ENCODE measurements at regions of chr3 and their contacts with region 1.

Region 1: GRCh38 chr3:4712143-4712542 is 219.0 kb downstream of the ITPR1 start:
- DNase-seq: peak in 1 of 2 donors; percentile 69
- H3K4me3 ChIP-seq: no peak overlapping the region
- H3K27ac ChIP-seq: peak overlapping the region; percentile 32 to 50
- H3K4me1 ChIP-seq: peaks cover 0 to 6% of the 10 kb centered on the region in 2 donors
- H3K27me3 ChIP-seq: no peaks in the 10 kb centered on the region
- CTCF ChIP-seq: no peak
- POLR2A ChIP-seq: no peak

Region 2: GRCh38 chr3:3726549-3726948 is 985.6 kb before region 1 on chr3:
- intact Hi-C with region 1: no loop called
- DNase-seq: no peak
- H3K4me3 ChIP-seq: no peak overlapping the region
- H3K27ac ChIP-seq: no peak overlapping the region
- H3K4me1 ChIP-seq: no peaks in the 10 kb centered on the region
- H3K27me3 ChIP-seq: no peaks in the 10 kb centered on the region
- CTCF ChIP-seq: no peak
- POLR2A ChIP-seq: no peak

Region 3: GRCh38 chr3:4340411-4341335 is 371.5 kb before region 1 on chr3:
- intact Hi-C with region 1: no loop called
- DNase-seq: peak in 1 of 2 donors; percentile 57
- H3K4me3 ChIP-seq: no peak overlapping the region
- H3K27ac ChIP-seq: peak overlapping the region; percentile 76 to 90
- H3K4me1 ChIP-seq: peaks cover 0 to 24% of the 10 kb centered on the region in 2 donors
- H3K27me3 ChIP-seq: no peaks in the 10 kb centered on the region
- CTCF ChIP-seq: no peak
- POLR2A ChIP-seq: no peak

Region 4: DNA sequence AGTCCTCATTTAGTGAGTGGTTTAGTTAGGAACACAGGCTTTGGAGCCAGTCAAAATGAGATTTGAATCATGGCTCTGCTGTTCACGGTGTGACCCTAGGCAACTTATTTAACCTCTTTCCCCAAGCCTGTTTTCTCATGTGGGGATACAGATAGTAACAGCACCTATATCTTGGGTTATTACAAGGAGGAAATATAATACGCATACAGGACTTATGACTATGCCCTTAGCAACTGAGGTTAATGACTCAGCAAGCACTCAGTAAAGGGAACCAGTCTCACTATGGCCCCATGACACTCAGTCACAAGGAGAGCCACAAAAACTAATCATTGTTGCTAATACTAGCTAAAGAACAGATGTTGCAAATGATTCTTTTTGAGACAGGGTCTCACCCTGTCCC is 291.0 kb before region 1 on chr3:
- intact Hi-C with region 1: no loop called
- DNase-seq: no peak
- H3K4me3 ChIP-seq: no peak overlapping the region
- H3K27ac ChIP-seq: no peak overlapping the region
- H3K4me1 ChIP-seq: no peaks in the 10 kb centered on the region
- H3K27me3 ChIP-seq: no peaks in the 10 kb centered on the region
- CTCF ChIP-seq: no peak
- POLR2A ChIP-seq: no peak

Region 5: GRCh38 chr3:5026331-5027218 is 314.4 kb after region 1 on chr3:
- intact Hi-C with region 1: loop called (anchors 10 kb)
- DNase-seq: peak; percentile 86 to 87
- H3K4me3 ChIP-seq: peak overlapping the region; percentile 35 to 40
- H3K27ac ChIP-seq: peak overlapping the region; percentile 77 to 85
- H3K4me1 ChIP-seq: no peaks in the 10 kb centered on the region
- H3K27me3 ChIP-seq: no peaks in the 10 kb centered on the region
- CTCF ChIP-seq: peak; percentile 73 to 89 (median 78)
- POLR2A ChIP-seq: peak in 1 of 2 donors; percentile 24

Region 6: DNA sequence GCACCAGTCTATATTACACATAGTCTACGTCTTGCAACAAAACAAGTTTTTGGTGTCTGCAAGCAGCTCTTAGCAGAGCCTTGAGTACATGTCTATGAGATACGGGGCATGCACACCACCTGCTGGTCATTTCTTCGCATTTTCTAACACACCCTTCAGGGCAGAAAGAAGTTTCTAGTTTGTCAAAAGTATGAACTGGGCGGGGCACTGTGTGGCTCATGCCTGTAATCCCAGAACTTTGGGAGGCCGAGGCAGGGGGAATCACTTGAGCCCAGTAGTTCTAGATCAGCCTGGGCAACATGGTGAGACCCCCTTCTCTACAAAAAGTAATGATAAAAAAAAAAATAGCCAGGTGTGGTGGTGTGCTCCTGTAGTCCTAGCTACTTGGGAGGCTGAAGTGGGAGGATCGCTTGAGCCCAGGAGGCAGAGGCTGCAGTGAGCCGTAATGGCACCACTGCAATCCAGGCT is 345.7 kb after region 1 on chr3:
- intact Hi-C with region 1: loop called (anchors 10 kb)
- DNase-seq: peak; percentile 76 to 81
- H3K4me3 ChIP-seq: no peak overlapping the region
- H3K27ac ChIP-seq: peak overlapping the region; percentile 13 to 42
- H3K4me1 ChIP-seq: peaks cover 5 to 6% of the 10 kb centered on the region in 2 donors
- H3K27me3 ChIP-seq: no peaks in the 10 kb centered on the region
- CTCF ChIP-seq: peak; percentile 59 to 86 (median 79)
- POLR2A ChIP-seq: no peak

Measured in uterus (tissue), 4 donors.